Naive thymus-derived CD4-positive, alpha-beta T cell (primary cell): ENCODE measurements at regions of chr2 and their contacts with region 1.

Region 1: GRCh38 chr2:224545884-224546644 is 39.1 kb downstream of the CUL3 start:
- DNase-seq: no peak
- ATAC-seq: peak; percentile 44
- H3K4me3 ChIP-seq: no peak overlapping the region
- H3K4me3 Mint-ChIP-seq: peak overlapping the region in 1 of 10 donors; percentile 40
- H3K27ac ChIP-seq: no peak overlapping the region
- H3K27ac Mint-ChIP-seq: peak overlapping the region in 6 of 9 donors; percentile 1 to 65 (median 52)
- H3K4me1 ChIP-seq: peaks cover 5 to 19% of the 10 kb centered on the region in 2 donors
- H3K4me1 Mint-ChIP-seq: peaks cover 23 to 86% (median 68%) of the 10 kb centered on the region in 7 donors
- H3K27me3 ChIP-seq: no peaks in the 10 kb centered on the region
- H3K27me3 Mint-ChIP-seq: no peaks in the 10 kb centered on the region

Region 2: DNA sequence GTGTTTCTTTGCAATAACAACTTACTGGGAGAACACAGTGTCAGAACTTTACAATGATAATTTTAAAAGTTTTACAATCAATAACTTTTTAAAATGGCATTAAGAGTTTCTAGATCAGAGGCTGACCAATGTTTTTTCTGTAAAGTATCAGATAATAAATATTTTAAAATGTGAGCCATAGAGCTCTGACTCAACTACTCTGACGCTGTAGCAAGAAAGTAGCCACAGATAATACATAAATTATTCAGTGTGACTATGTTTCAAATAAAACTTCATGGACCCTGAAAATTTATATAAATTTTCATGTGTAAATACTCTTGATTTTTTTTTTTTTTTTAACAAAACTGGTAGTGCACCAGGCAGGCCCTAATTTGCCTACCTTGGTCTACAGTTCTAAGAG is 38.3 kb before region 1 on chr2:
- CTCF ChIA-PET with region 1: no interaction called
- POLR2A ChIA-PET with region 1: no interaction called
- intact Hi-C with region 1: loop called in 1 of 2 experiments (anchors 5 kb)
- DNase-seq: no peak
- ATAC-seq: no peak
- H3K4me3 ChIP-seq: no peak overlapping the region
- H3K4me3 Mint-ChIP-seq: no peak overlapping the region
- H3K27ac ChIP-seq: no peak overlapping the region
- H3K27ac Mint-ChIP-seq: no peak overlapping the region
- H3K4me1 ChIP-seq: no peaks in the 10 kb centered on the region
- H3K4me1 Mint-ChIP-seq: peaks cover 6 to 18% (median 13%) of the 10 kb centered on the region in 7 donors
- H3K27me3 ChIP-seq: no peaks in the 10 kb centered on the region
- H3K27me3 Mint-ChIP-seq: no peaks in the 10 kb centered on the region

Region 3: GRCh38 chr2:224532931-224533330 is 13.1 kb before region 1 on chr2:
- CTCF ChIA-PET with region 1: no interaction called
- POLR2A ChIA-PET with region 1: no interaction called
- intact Hi-C with region 1: loop called in 1 of 2 experiments (anchors 2 kb)
- DNase-seq: no peak
- ATAC-seq: no peak
- H3K4me3 ChIP-seq: no peak overlapping the region
- H3K4me3 Mint-ChIP-seq: peak overlapping the region in 4 of 10 donors; percentile 1 to 23 (median 13)
- H3K27ac ChIP-seq: no peak overlapping the region
- H3K27ac Mint-ChIP-seq: peak overlapping the region in 8 of 9 donors; percentile 16 to 77 (median 40)
- H3K4me1 ChIP-seq: peaks cover 3 to 4% of the 10 kb centered on the region in 2 donors
- H3K4me1 Mint-ChIP-seq: peaks cover 33 to 75% (median 66%) of the 10 kb centered on the region in 7 donors
- H3K27me3 ChIP-seq: no peaks in the 10 kb centered on the region
- H3K27me3 Mint-ChIP-seq: no peaks in the 10 kb centered on the region

Region 4: GRCh38 chr2:224576088-224576715 is 30.1 kb after region 1 on chr2:
- CTCF ChIA-PET with region 1: no interaction called
- POLR2A ChIA-PET with region 1: no interaction called
- intact Hi-C with region 1: loop called in 1 of 2 experiments (anchors 5 kb)
- DNase-seq: no peak
- ATAC-seq: peak; percentile 47
- H3K4me3 ChIP-seq: peak overlapping the region; percentile 5
- H3K4me3 Mint-ChIP-seq: peak overlapping the region; percentile 22 to 85 (median 72)
- H3K27ac ChIP-seq: no peak overlapping the region
- H3K27ac Mint-ChIP-seq: peak overlapping the region in 6 of 9 donors; percentile 0 to 56 (median 17)
- H3K4me1 ChIP-seq: peaks cover 69 to 70% of the 10 kb centered on the region in 2 donors
- H3K4me1 Mint-ChIP-seq: peaks cover 56 to 99% (median 95%) of the 10 kb centered on the region in 7 donors
- H3K27me3 ChIP-seq: no peaks in the 10 kb centered on the region
- H3K27me3 Mint-ChIP-seq: no peaks in the 10 kb centered on the region

Region 5: GRCh38 chr2:224611938-224612337 is 65.9 kb after region 1 on chr2:
- CTCF ChIA-PET with region 1: no interaction called
- POLR2A ChIA-PET with region 1: no interaction called
- intact Hi-C with region 1: no loop called
- DNase-seq: no peak
- ATAC-seq: no peak
- H3K4me3 ChIP-seq: no peak overlapping the region
- H3K4me3 Mint-ChIP-seq: no peak overlapping the region
- H3K27ac ChIP-seq: no peak overlapping the region
- H3K27ac Mint-ChIP-seq: no peak overlapping the region
- H3K4me1 ChIP-seq: no peaks in the 10 kb centered on the region
- H3K4me1 Mint-ChIP-seq: peaks cover 0 to 3% (median 0%) of the 10 kb centered on the region in 7 donors
- H3K27me3 ChIP-seq: no peaks in the 10 kb centered on the region
- H3K27me3 Mint-ChIP-seq: peaks cover 0 to 12% (median 5%) of the 10 kb centered on the region in 5 donors